Activated CD4-positive, alpha-beta T cell treated with anti-CD3 and anti-CD28 coated beads for 36 hours (primary cell): ENCODE measurements at regions of chr10 and their contacts with region 1.

Region 1: GRCh38 chr10:118990326-118990725 is 39.2 kb upstream of the NANOS1 start:
- DNase-seq: no peak
- ATAC-seq: no peak
- H3K4me3 Mint-ChIP-seq: no peak overlapping the region
- H3K27ac Mint-ChIP-seq: no peak overlapping the region
- H3K4me1 Mint-ChIP-seq: peaks cover 9% of the 10 kb centered on the region
- H3K27me3 Mint-ChIP-seq: peaks cover 6% of the 10 kb centered on the region

Region 2: DNA sequence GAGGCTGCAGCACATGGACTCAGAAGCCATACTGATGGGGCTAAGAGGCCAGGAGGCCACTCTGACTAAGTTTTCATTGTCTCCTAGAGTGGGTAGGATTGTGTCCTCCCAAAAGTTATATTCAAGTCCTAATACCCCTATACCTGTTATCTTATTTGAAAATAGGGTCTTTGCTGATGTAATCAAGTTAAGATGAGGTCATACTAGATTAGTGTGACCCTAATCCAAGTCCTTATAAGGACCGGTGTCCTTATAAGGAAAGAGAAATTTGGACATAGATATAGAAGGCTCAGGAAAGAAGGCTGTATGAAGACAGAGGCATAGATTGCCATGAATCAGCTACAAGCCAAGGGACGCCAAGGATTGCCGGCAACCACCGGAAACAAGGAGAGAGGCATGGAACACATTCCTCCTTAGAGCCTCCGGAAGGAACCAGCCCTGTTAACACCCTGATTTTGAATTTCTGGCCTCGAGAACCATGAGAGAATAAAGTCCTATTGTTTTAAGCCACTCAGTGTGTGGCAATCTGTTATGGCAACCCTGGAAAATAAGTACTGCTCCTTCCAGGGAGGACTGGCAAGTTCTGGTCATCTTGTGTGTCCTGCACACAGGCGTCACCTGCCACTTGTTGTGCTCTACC is 1290.8 kb before region 1 on chr10:
- CTCF ChIA-PET with region 1: no interaction called
- POLR2A ChIA-PET with region 1: no interaction called
- intact Hi-C with region 1: no loop called
- DNase-seq: no peak
- ATAC-seq: no peak
- H3K4me3 Mint-ChIP-seq: no peak overlapping the region
- H3K27ac Mint-ChIP-seq: no peak overlapping the region
- H3K4me1 Mint-ChIP-seq: no peaks in the 10 kb centered on the region
- H3K27me3 Mint-ChIP-seq: peaks cover 2% of the 10 kb centered on the region

Region 3: GRCh38 chr10:119051775-119052174 is 61.4 kb after region 1 on chr10:
- CTCF ChIA-PET with region 1: no interaction called
- POLR2A ChIA-PET with region 1: no interaction called
- intact Hi-C with region 1: no loop called
- DNase-seq: no peak
- ATAC-seq: no peak
- H3K4me3 Mint-ChIP-seq: no peak overlapping the region
- H3K27ac Mint-ChIP-seq: no peak overlapping the region
- H3K4me1 Mint-ChIP-seq: peaks cover 4% of the 10 kb centered on the region
- H3K27me3 Mint-ChIP-seq: no peaks in the 10 kb centered on the region

Region 4: GRCh38 chr10:119333146-119333792 is 342.9 kb after region 1 on chr10:
- CTCF ChIA-PET with region 1: no interaction called
- POLR2A ChIA-PET with region 1: no interaction called
- intact Hi-C with region 1: loop called in 1 of 2 experiments (anchors 10 kb)
- DNase-seq: peak; percentile 75
- ATAC-seq: peak; percentile 99
- H3K4me3 Mint-ChIP-seq: no peak overlapping the region
- H3K27ac Mint-ChIP-seq: no peak overlapping the region
- H3K4me1 Mint-ChIP-seq: peaks cover 11% of the 10 kb centered on the region
- H3K27me3 Mint-ChIP-seq: no peaks in the 10 kb centered on the region